Thyroid gland (tissue), 4 donors: ENCODE measurements at regions of chr5 and their contacts with region 1.

Region 1: GRCh38 chr5:42423285-42424165 is at the start of gene GHR:
- DNase-seq: peak; percentile 85 to 88
- H3K4me3 ChIP-seq: peak within 1 kb of the TSS; percentile 42 to 63 (median 52)
- H3K27ac ChIP-seq: peak within 1 kb of the TSS; percentile 52 to 71 (median 70)
- H3K4me1 ChIP-seq: peaks cover 0 to 17% of the 10 kb centered on the region in 2 donors
- H3K27me3 ChIP-seq: no peaks in the 10 kb centered on the region
- CTCF ChIP-seq: peak; percentile 65 to 87 (median 80)
- POLR2A ChIP-seq: peak in 1 of 2 donors; percentile 39
- total RNA-seq, gene GHR: 10.9 to 14.9 (median 14.2) TPM

Region 2: GRCh38 chr5:42566652-42567295 is 143.2 kb after region 1 on chr5:
- intact Hi-C with region 1: loop called (anchors 5 kb)
- DNase-seq: peak in 1 of 2 donors; percentile 15
- H3K4me3 ChIP-seq: no peak overlapping the region
- H3K27ac ChIP-seq: peak overlapping the region in 2 of 3 donors; percentile 19 to 30
- H3K4me1 ChIP-seq: peaks cover 11 to 18% of the 10 kb centered on the region in 2 donors
- H3K27me3 ChIP-seq: no peaks in the 10 kb centered on the region
- CTCF ChIP-seq: no peak
- POLR2A ChIP-seq: no peak

Region 3: DNA sequence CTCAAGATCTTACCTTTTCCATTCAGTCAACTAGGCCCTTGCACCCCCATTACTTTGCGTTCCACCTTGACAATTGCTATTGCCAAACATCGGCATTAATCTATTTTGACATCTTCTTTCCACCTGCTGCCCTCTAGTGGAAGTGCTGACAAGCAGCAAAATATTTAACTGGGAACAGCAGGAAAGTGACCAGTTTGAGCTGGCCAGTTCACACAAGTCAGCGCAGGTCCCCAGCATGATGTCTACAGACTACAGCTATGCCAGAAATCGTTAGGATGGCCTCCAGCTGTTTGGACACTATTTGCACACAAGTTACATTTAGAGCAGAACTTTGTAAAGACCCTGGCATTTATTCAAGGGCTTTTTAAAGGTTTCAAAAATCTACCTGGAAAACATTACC is 159.8 kb after region 1 on chr5:
- intact Hi-C with region 1: loop called (anchors 5 kb)
- DNase-seq: peak; percentile 50 to 64
- H3K4me3 ChIP-seq: no peak overlapping the region
- H3K27ac ChIP-seq: no peak overlapping the region
- H3K4me1 ChIP-seq: peaks cover 18 to 27% of the 10 kb centered on the region in 2 donors
- H3K27me3 ChIP-seq: no peaks in the 10 kb centered on the region
- CTCF ChIP-seq: peak; percentile 32 to 79 (median 68)
- POLR2A ChIP-seq: no peak